Tibial artery (tissue), 4 donors: ENCODE measurements at regions of chr13 and their contacts with region 1.

Region 1: GRCh38 chr13:30493658-30494381 is 28.1 kb upstream of the HMGB1 start:
- DNase-seq: no peak
- H3K4me3 ChIP-seq: no peak overlapping the region
- H3K27ac ChIP-seq: no peak overlapping the region
- H3K4me1 ChIP-seq: no peaks in the 10 kb centered on the region
- H3K27me3 ChIP-seq: no peaks in the 10 kb centered on the region
- CTCF ChIP-seq: no peak

Region 2: GRCh38 chr13:29170436-29171082 is 1323.3 kb before region 1 on chr13:
- intact Hi-C with region 1: loop called (anchors 10 kb)
- DNase-seq: no peak
- H3K4me3 ChIP-seq: no peak overlapping the region
- H3K27ac ChIP-seq: no peak overlapping the region
- H3K4me1 ChIP-seq: no peaks in the 10 kb centered on the region
- H3K27me3 ChIP-seq: no peaks in the 10 kb centered on the region
- CTCF ChIP-seq: no peak